Dorsolateral prefrontal cortex (tissue), 120 donors: ENCODE measurements at regions of chr4 and their contacts with region 1.

Region 1: DNA sequence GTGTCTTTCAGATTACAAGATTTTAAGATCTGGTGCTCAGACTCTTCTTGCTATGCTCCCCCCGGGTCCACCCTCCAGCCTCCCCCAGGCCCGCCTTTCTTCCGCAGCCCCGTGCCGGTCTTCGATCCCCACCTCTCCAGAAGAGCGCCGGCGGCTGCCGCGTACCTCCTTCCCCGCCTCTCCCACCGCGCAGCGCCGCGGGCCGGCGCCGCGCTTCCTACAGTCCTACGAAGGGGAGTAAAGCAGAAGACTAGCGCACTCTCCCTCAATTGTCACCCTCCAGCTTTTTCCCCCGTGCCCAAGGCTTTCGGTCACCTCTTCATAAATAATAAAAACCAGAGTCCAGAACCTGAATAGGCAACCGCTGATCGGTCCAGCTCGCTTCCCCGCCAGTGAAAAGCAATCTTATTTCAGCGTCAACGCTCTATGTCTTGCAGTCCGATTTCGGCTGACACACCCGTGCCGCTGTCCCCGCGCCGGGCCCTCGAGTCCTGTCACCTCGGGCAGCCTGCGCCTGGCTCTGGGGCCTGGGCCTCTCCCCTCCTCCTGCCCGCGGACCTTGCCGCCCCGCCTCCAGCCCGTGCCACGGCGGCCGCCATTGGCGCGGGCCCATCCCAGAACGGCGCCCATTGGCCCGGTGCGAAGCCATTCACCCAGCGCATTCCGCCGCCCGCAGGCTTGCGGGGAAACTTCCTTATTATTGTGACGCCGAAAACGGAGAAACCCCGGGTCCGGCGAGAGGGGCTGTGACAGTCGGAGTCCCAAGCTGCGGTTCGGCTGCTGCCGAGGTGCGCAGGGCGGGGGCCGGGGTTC is at the start of gene HERC3:
- DNase-seq: peak; percentile 79 to 98 (median 90)
- H3K4me3 ChIP-seq: peak within 1 kb of the TSS; percentile 65 to 98 (median 93)
- H3K27ac ChIP-seq: peak within 1 kb of the TSS; percentile 81 to 99 (median 95)
- H3K27me3 ChIP-seq: no peaks in the 10 kb centered on the region
- CTCF ChIP-seq: peak in 30 of 56 donors; percentile 7 to 38 (median 22)
- total RNA-seq, gene HERC3: 37.3 to 96.2 (median 67.6) TPM

Region 2: GRCh38 chr4:88467392-88467791 is 124.6 kb before region 1 on chr4:
- intact Hi-C with region 1: no loop called
- DNase-seq: no peak
- H3K4me3 ChIP-seq: no peak overlapping the region
- H3K27ac ChIP-seq: no peak overlapping the region
- H3K27me3 ChIP-seq: no peaks in the 10 kb centered on the region
- CTCF ChIP-seq: no peak

Region 3: GRCh38 chr4:88653371-88653946 is 61.5 kb after region 1 on chr4:
- intact Hi-C with region 1: loop called in 1 of 2 experiments (anchors 5 kb)
- DNase-seq: no peak
- H3K4me3 ChIP-seq: no peak overlapping the region
- H3K27ac ChIP-seq: no peak overlapping the region
- H3K27me3 ChIP-seq: no peaks in the 10 kb centered on the region
- CTCF ChIP-seq: no peak

Region 4: DNA sequence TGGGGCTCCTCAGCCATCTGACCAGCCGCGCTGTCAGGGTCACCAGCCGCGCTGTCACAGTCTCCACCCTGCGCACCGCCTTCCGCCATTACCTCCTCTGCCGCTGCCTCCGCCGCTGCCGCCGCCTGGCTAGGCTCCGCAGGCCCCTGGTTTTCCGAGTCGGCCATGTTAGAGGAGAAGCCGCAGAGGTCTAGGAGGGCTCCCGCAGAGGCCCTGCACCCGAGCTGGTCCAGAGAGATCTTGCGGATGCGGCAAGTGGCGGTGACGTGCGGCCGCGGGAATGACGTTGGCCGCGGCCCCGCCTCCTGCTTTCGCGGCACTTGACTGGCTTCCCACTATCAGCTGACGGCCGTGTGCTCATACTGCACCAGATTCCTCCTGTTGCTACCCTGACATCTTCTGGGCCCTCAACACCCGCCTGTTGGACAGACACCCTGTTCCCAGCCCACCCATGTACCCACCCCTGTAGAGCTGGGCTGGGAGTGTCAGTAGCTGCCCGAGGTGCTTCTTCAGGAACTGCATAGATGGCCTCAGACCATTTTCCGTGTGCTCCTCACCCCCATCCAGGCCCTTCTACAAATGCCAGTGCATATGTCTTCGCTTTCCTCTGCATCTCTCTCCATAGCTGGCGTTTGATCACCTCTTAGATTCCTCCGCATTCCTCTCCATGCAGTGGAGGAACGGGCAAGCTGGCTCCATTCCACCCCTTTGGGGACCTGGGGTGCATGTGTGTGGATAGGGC is 105.8 kb after region 1 on chr4 and contains the start of gene NAP1L5:
- intact Hi-C with region 1: loop called in 1 of 2 experiments (anchors 5 kb)
- DNase-seq: peak; percentile 58 to 80 (median 74)
- H3K4me3 ChIP-seq: peak within 1 kb of the TSS; percentile 42 to 84 (median 67)
- H3K27ac ChIP-seq: peak within 1 kb of the TSS; percentile 28 to 94 (median 84)
- H3K27me3 ChIP-seq: no peaks in the 10 kb centered on the region
- CTCF ChIP-seq: no peak
- total RNA-seq, gene NAP1L5: 20.1 to 153 (median 95.5) TPM